ENCODE measurements at regions of chr22 and their contacts with region 1.

Region 1: GRCh38 chr22:20258584-20259326 is 9.4 kb downstream of the RTN4R start:
- DNase-seq: no peak
- H3K4me3 ChIP-seq: no peak overlapping the region
- H3K27ac ChIP-seq: no peak overlapping the region
- H3K4me1 ChIP-seq: no peaks in the 10 kb centered on the region
- H3K27me3 ChIP-seq: no peaks in the 10 kb centered on the region
- CTCF ChIP-seq: peak in 1 of 2 donors; percentile 27

Region 2: GRCh38 chr22:20126284-20127029 is 132.3 kb before region 1 on chr22:
- CTCF ChIA-PET with region 1: no interaction called
- dilution Hi-C with region 1: no loop called
- in situ Hi-C with region 1: no loop called
- intact Hi-C with region 1: no loop called
- DNase-seq: no peak
- H3K4me3 ChIP-seq: no peak overlapping the region
- H3K27ac ChIP-seq: no peak overlapping the region
- H3K4me1 ChIP-seq: no peaks in the 10 kb centered on the region
- H3K27me3 ChIP-seq: no peaks in the 10 kb centered on the region
- CTCF ChIP-seq: no peak

Region 3: DNA sequence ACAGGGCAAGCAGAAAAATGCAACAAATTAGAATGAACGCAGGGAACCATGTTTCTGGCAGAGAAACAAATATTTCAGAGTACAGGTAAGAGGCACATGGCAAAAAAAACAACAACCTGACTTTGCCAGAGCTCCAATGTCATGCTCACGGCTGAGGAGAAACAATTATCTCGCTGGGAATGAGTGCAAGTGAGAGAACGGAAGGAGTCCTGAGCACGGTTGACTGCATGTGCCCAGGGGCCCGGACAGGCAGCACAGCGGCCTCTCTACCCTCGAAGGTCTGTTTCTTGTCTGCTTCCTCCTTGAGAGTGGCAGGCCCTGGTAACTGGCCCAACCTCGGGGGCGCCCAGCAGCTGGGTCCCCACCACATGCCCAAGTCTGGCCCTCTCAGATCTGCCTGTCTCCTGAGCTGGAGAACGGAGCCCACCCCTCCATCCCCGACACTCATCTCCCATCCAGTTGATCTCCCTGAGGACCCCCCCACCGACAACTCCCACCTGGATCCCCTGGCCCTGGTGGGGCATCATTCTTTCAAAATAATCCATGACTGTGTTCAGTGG is 34.0 kb after region 1 on chr22:
- CTCF ChIA-PET with region 1: no interaction called
- dilution Hi-C with region 1: loop called (anchors 5 kb)
- in situ Hi-C with region 1: no loop called
- intact Hi-C with region 1: no loop called
- DNase-seq: no peak
- H3K4me3 ChIP-seq: no peak overlapping the region
- H3K27ac ChIP-seq: no peak overlapping the region
- H3K4me1 ChIP-seq: no peaks in the 10 kb centered on the region
- H3K27me3 ChIP-seq: peaks cover 2% of the 10 kb centered on the region
- CTCF ChIP-seq: no peak

Measured in mammary epithelial cell (primary cell).